Dendritic cell treated with granulocyte-macrophage colony-stimulating factor and Interleukin-4, amounts not matched to agents 40 ng/mL and 50 ng/mL, for 4 days (primary cell): ENCODE measurements at regions of chr12 and their contacts with region 1.

Region 1: GRCh38 chr12:76037130-76038103 is 5.8 kb upstream of the PHLDA1 start:
- H3K4me3 Mint-ChIP-seq: no peak overlapping the region
- H3K27ac Mint-ChIP-seq: no peak overlapping the region
- H3K4me1 Mint-ChIP-seq: peaks cover 10% of the 10 kb centered on the region
- H3K27me3 Mint-ChIP-seq: peaks cover 12% of the 10 kb centered on the region

Region 2: GRCh38 chr12:75526655-75527511 is 510.5 kb before region 1 on chr12:
- intact Hi-C with region 1: loop called (anchors 1 kb)
- H3K4me3 Mint-ChIP-seq: no peak overlapping the region
- H3K27ac Mint-ChIP-seq: peak overlapping the region; percentile 35
- H3K4me1 Mint-ChIP-seq: peaks cover 7% of the 10 kb centered on the region
- H3K27me3 Mint-ChIP-seq: peaks cover 9% of the 10 kb centered on the region

Region 3: DNA sequence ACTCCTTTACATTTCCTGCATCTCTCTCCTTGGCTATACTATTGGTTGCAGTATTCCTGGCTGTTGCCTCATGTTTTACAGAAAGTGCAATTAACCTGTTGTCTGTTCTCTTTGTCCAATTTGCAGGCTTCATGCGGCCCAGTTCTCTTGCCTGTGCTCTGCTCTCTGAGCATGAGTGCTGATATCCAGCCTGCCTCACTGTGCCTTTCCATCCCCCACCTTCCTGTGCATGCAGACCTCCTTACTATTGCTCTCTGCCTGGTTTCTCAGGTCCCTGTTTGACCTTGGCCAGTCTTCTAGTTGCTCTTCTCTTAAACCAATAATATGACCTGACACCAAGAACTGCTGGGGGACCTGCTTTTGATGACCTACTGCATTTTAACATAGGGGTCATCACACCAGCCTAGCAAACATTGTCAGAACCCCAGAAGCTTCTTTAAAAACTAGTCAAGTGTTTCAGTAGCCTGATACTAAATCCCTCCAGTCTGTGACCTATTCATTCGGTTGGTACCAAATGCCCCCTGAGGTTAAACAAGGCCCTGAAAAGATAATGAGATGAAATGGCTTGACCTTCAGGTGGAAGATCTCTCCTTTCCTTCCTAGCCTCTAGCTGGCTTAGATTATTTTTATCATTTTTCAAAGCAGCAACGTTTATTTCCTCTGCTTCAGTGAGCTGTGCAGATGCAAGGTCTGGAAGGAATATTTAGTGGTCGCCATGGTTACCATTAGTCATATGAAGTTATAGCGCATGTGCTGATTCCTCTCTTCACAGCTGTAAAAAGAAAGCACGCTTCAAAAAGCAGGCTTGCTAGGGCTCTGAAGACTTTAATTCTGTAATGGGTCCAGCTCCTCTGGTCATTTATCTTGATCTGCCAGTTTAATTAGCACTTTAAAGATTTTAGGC is 222.3 kb before region 1 on chr12:
- intact Hi-C with region 1: loop called (anchors 5 kb)
- H3K4me3 Mint-ChIP-seq: no peak overlapping the region
- H3K27ac Mint-ChIP-seq: no peak overlapping the region
- H3K4me1 Mint-ChIP-seq: no peaks in the 10 kb centered on the region
- H3K27me3 Mint-ChIP-seq: peaks cover 11% of the 10 kb centered on the region

Region 4: DNA sequence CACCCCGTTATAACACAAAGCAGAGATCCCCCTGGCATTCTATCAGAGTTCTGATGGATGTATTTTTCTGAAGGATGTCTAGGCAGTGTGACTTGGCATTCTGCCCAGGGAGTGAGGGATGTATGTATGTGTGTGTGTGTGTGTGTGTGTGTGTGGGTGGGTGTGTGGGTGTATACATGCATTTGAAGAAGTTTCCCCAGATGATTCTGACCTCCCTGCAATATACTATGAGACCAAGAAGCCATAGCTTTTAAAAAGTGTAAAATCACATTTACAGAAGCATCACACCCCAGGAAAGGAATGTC is 106.8 kb after region 1 on chr12:
- intact Hi-C with region 1: no loop called
- H3K4me3 Mint-ChIP-seq: no peak overlapping the region
- H3K27ac Mint-ChIP-seq: no peak overlapping the region
- H3K4me1 Mint-ChIP-seq: peaks cover 13% of the 10 kb centered on the region
- H3K27me3 Mint-ChIP-seq: no peaks in the 10 kb centered on the region